Activated B cell treated with CpG ODN at 0.5 μM for 24 hours (primary cell): ENCODE measurements at regions of chr3 and their contacts with region 1.

Region 1: GRCh38 chr3:12954891-12955650 is 113.7 kb upstream of the RPL32 start:
- DNase-seq: peak; percentile 67
- ATAC-seq: peak; percentile 95
- H3K4me3 Mint-ChIP-seq: peak overlapping the region; percentile 63
- H3K27ac Mint-ChIP-seq: peak overlapping the region; percentile 82
- H3K4me1 Mint-ChIP-seq: peaks cover 86% of the 10 kb centered on the region
- H3K27me3 Mint-ChIP-seq: no peaks in the 10 kb centered on the region
- CTCF ChIP-seq: no peak

Region 2: DNA sequence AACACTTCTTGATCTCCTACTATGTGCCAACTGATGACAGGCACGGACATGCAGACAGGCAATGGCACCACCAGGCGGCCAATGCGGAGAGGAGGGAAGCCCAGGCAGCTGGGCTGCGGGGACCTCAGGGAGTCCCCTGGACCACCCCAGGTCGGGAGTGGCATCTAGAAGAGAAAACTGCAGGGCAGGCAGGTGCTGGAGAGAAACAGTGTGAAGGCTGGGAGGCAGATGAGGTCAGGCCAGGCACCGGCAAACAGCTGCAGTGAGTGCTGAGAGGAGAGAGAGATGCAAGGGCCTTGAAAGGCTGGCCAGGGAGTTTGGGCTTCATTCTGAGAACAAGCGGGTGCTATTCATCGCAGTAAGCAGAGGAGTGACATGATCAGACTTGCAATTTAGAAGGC is 1933.5 kb before region 1 on chr3:
- CTCF ChIA-PET with region 1: no interaction called
- POLR2A ChIA-PET with region 1: no interaction called
- intact Hi-C with region 1: no loop called
- DNase-seq: no peak
- ATAC-seq: no peak
- H3K4me3 Mint-ChIP-seq: no peak overlapping the region
- H3K27ac Mint-ChIP-seq: no peak overlapping the region
- H3K4me1 Mint-ChIP-seq: no peaks in the 10 kb centered on the region
- H3K27me3 Mint-ChIP-seq: peaks cover 4% of the 10 kb centered on the region
- CTCF ChIP-seq: no peak

Region 3: DNA sequence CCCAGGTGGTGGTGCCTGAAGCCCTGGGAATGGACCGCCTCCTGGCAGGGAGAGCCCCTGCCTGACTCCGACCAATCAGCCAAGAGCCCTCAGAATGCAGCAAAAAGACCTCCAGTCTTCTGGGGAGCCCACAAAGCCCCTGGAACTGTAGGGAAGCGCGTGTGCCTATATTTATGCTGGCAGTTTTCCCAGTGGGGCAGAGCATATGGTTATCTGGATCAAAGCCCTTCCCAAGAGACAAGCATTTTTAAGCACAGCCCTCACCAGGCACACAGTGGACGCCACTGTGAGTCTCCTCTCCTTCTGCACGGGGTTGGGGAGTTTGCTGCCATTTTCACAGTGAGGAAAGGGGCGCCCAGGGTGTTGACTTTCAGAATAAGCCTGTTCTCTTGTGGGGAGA is 32.8 kb before region 1 on chr3:
- CTCF ChIA-PET with region 1: no interaction called
- POLR2A ChIA-PET with region 1: no interaction called
- intact Hi-C with region 1: loop called (anchors 5 kb)
- DNase-seq: no peak
- ATAC-seq: no peak
- H3K4me3 Mint-ChIP-seq: no peak overlapping the region
- H3K27ac Mint-ChIP-seq: no peak overlapping the region
- H3K4me1 Mint-ChIP-seq: peaks cover 30% of the 10 kb centered on the region
- H3K27me3 Mint-ChIP-seq: no peaks in the 10 kb centered on the region
- CTCF ChIP-seq: no peak

Region 4: DNA sequence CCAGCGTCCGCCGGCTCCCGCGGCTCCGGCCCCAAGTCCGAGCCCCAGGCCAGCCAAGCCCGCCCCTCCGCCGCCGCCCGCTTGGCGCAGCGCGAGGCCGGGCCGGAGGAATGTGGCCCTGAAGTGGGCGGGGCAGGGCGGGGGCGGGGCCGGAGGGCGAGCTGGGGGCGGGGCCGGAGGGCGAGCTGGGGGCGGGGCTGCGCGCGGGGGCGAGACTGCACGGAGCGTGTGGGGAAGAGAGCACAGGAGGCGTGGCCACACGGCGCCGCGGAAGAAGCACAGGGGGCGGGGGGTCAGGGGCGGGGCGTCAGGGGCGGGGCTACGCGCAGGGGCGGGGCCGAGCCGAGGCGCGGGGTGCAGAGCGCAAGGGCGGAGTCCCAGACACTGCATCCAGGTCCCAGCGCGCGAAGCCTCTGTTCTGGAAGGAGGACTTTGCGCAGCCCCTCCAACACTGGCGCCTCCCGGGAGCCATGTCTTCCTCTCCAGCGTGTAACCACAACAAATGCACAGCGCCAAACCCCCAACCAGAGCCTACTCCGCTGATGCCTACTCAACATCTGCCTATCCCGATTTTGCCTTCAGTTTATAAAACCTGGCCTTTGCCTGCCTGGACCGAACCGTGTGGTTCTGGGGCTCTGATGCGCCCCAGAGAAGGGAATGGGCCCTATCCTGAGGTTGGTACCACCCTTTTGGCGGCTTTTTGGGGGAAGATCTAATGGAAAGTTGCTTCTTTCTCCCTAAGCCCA is 12.7 kb after region 1 on chr3:
- CTCF ChIA-PET with region 1: no interaction called
- POLR2A ChIA-PET with region 1: interaction called, 3 read pairs
- intact Hi-C with region 1: loop called (anchors 1 kb)
- DNase-seq: peak; percentile 77
- ATAC-seq: peak; percentile 96
- H3K4me3 Mint-ChIP-seq: peak overlapping the region; percentile 72
- H3K27ac Mint-ChIP-seq: peak overlapping the region; percentile 20
- H3K4me1 Mint-ChIP-seq: peaks cover 86% of the 10 kb centered on the region
- H3K27me3 Mint-ChIP-seq: no peaks in the 10 kb centered on the region
- CTCF ChIP-seq: no peak